Activated CD8-positive, alpha-beta T cell treated with anti-CD3 and anti-CD28 coated beads, Interleukin-2, amount 10 ng/mL, durations not matched to agents 7 days and 5 days (primary cell): ENCODE measurements at regions of chr11 and their contacts with region 1.

Region 1: DNA sequence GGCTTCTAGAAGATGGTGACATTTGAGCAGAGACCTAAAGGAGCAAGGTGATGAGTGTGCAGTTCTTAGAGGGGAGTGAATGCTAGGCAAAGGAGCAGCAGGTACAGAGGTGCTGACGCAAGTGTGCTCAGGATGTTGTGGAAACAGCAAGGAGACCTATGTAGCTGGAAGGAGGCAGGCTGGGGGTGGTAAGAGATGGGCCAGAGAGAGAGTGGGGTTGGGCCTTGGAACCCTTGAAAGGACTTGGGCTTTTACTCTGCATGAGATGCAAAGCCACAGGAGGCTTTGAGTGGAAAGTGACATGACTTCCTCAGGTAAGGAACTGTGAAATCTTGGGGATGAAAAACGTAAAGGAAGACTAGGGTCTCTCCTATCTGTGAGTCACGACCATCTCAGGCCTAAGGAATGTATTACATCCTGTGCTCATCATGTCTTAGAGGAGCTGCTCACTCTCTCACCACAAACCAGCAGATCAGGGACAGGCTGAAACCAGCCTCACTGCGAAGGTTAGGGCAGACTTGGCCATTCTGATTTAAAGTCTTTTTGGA is 65.4 kb downstream of the MICAL2 start:
- DNase-seq: no peak
- ATAC-seq: peak; percentile 78
- H3K4me3 Mint-ChIP-seq: no peak overlapping the region
- H3K27ac Mint-ChIP-seq: peak overlapping the region; percentile 86
- H3K4me1 Mint-ChIP-seq: peaks cover 65% of the 10 kb centered on the region
- H3K27me3 Mint-ChIP-seq: no peaks in the 10 kb centered on the region

Region 2: DNA sequence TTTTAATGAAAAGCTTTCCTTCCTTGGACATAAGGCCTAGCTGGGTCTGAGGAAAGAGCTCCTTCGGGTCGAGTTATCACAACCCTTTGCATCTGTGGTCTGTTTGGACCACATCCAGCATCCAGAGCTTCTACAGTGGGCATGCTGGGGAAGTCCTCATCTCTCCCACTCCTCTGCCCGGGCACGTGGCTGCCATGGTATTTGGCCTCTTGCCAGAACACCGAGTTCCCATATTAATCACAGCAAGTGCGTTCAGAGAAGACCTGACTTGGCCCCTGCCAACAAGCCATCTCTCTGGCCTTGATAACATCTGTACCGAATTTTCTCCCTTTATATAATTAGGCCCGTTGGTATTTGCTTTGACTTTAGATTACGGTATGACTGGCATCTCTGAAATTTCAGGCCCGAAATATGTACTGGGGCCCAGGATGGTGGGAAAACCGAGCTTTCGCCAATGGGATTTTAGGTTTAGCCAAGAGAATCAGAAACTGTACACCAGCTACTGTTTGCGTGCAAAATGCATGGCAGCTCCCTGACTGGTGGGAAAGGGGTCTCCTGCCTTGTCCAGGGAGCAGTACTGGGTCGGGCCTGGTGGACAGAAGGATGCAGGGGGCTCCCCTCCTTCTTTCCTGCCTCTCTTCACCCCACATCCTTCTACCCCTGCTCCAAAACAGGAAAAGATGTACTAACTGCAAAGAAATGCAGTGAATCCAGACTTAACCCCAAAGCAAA is 24.7 kb after region 1 on chr11:
- CTCF ChIA-PET with region 1: interaction called, 13 read pairs
- POLR2A ChIA-PET with region 1: interaction called, 12 read pairs
- DNase-seq: no peak
- ATAC-seq: no peak
- H3K4me3 Mint-ChIP-seq: no peak overlapping the region
- H3K27ac Mint-ChIP-seq: no peak overlapping the region
- H3K4me1 Mint-ChIP-seq: peaks cover 57% of the 10 kb centered on the region
- H3K27me3 Mint-ChIP-seq: no peaks in the 10 kb centered on the region